Activated CD4-positive, alpha-beta memory T cell treated with anti-CD3 and anti-CD28 coated beads for 36 hours (primary cell): ENCODE measurements at regions of chr5 and their contacts with region 1.

Region 1: GRCh38 chr5:43120720-43121564 is at the start of gene ZNF131:
- DNase-seq: peak; percentile 97
- H3K4me3 Mint-ChIP-seq: peak within 1 kb of the TSS; percentile 97
- H3K27ac Mint-ChIP-seq: peak within 1 kb of the TSS; percentile 96
- H3K4me1 Mint-ChIP-seq: peaks cover 33% of the 10 kb centered on the region
- H3K27me3 Mint-ChIP-seq: no peaks in the 10 kb centered on the region
- total RNA-seq, gene ZNF131: 27.3 to 27.8 TPM

Region 2: DNA sequence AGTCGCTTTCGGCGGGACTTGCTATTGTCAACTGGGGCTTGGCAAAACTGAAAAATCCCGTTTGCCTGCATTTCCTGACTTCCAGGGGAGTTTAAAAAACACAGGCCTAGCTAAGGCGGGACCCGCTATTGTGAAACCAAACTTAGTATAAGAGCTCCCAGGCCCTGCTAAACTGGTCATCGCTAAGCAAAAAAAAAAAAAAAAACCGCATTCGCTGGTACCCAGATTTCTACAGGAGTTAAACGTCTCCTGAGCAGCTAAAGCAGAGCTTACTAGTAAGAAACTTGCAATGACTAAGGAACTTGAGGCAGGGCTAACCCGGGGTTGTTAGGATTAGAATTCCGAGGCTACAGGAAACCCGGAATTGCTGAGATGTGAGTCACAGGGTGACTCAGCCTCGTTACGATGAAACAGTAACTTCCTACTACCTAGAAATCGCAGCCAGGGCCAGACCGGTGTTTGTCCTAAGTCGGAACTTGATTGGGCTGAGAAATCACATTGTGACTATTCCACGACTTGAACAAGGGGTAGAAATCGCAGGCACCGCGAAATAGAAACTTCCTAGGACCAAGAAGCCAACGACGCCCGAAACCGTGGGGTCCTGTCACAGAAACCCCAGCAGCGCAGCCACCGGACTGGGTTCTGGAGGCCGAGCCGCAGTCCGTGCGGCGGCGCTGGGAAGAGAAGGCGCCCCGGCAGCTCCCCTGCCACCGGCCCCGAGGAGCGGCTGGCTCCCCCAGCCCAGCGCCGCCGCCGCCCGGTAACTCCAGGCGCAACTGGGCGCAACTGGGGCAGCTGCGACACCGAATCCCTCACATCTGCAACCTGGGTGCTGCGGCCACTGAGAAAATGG is 170.3 kb before region 1 on chr5:
- CTCF ChIA-PET with region 1: interaction called, 3 read pairs
- POLR2A ChIA-PET with region 1: interaction called, 8 read pairs
- intact Hi-C with region 1: loop called (anchors 2 kb)
- DNase-seq: peak; percentile 86
- H3K4me3 Mint-ChIP-seq: peak overlapping the region; percentile 94
- H3K27ac Mint-ChIP-seq: peak overlapping the region; percentile 97
- H3K4me1 Mint-ChIP-seq: peaks cover 30% of the 10 kb centered on the region
- H3K27me3 Mint-ChIP-seq: no peaks in the 10 kb centered on the region

Region 3: GRCh38 chr5:43066799-43067741 is 53.9 kb before region 1 on chr5:
- CTCF ChIA-PET with region 1: interaction called, 5 read pairs
- POLR2A ChIA-PET with region 1: interaction called, 29 read pairs
- intact Hi-C with region 1: loop called (anchors 1 kb)
- DNase-seq: peak; percentile 92
- H3K4me3 Mint-ChIP-seq: peak overlapping the region; percentile 96
- H3K27ac Mint-ChIP-seq: peak overlapping the region; percentile 99
- H3K4me1 Mint-ChIP-seq: peaks cover 37% of the 10 kb centered on the region
- H3K27me3 Mint-ChIP-seq: no peaks in the 10 kb centered on the region

Region 4: GRCh38 chr5:43191740-43192557 is 71.0 kb after region 1 on chr5 and contains the start of gene NIM1K:
- CTCF ChIA-PET with region 1: interaction called, 6 read pairs
- POLR2A ChIA-PET with region 1: interaction called, 12 read pairs
- intact Hi-C with region 1: loop called (anchors 1 kb)
- DNase-seq: peak; percentile 62
- H3K4me3 Mint-ChIP-seq: peak within 1 kb of the TSS; percentile 78
- H3K27ac Mint-ChIP-seq: no peak within 1 kb of the TSS
- H3K4me1 Mint-ChIP-seq: peaks cover 31% of the 10 kb centered on the region
- H3K27me3 Mint-ChIP-seq: peaks cover 16% of the 10 kb centered on the region
- total RNA-seq, gene NIM1K: 0.75 to 1.00 TPM

Region 5: GRCh38 chr5:43484106-43484849 is 363.3 kb after region 1 on chr5:
- CTCF ChIA-PET with region 1: interaction called, 17 read pairs
- POLR2A ChIA-PET with region 1: interaction called, 16 read pairs
- intact Hi-C with region 1: loop called (anchors 1 kb)
- DNase-seq: peak; percentile 93
- H3K4me3 Mint-ChIP-seq: peak overlapping the region; percentile 98
- H3K27ac Mint-ChIP-seq: peak overlapping the region; percentile 100
- H3K4me1 Mint-ChIP-seq: peaks cover 49% of the 10 kb centered on the region
- H3K27me3 Mint-ChIP-seq: no peaks in the 10 kb centered on the region

Region 6: DNA sequence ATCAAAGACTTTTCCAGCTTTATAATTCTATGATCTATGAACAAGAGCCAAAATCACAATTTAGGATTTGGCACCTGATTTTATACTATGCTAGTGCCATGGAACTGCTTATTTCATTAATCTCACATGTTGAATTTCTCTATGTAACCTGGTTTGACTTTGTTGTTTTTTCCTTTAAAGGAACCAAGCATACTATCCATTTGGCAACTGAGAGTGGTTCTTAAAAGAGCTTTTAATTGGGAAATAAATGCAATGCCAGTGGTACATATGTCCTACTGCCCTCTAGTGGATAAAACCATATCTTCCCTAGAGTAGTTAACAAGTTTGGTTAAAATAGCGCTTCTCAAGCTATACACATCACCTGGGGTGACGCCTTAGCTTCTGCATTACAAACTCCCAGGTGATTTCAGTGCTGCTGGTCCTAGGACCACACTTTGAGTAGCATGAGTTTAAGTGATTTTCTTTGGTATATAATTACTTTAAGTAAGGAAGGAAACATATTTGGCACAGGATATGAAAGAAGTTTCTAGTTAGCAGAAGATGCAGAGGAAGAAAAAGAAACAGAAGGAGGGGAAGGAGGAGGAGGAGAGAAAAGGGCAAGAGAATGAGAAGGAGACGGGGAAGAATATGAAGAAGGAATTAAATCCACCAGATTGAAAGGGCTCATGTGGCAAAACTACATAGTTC is 1211.5 kb after region 1 on chr5:
- CTCF ChIA-PET with region 1: no interaction called
- POLR2A ChIA-PET with region 1: no interaction called
- intact Hi-C with region 1: no loop called
- DNase-seq: no peak
- H3K4me3 Mint-ChIP-seq: no peak overlapping the region
- H3K27ac Mint-ChIP-seq: no peak overlapping the region
- H3K4me1 Mint-ChIP-seq: no peaks in the 10 kb centered on the region
- H3K27me3 Mint-ChIP-seq: no peaks in the 10 kb centered on the region